ENCODE measurements at regions of chr11 and their contacts with region 1.

Region 1: DNA sequence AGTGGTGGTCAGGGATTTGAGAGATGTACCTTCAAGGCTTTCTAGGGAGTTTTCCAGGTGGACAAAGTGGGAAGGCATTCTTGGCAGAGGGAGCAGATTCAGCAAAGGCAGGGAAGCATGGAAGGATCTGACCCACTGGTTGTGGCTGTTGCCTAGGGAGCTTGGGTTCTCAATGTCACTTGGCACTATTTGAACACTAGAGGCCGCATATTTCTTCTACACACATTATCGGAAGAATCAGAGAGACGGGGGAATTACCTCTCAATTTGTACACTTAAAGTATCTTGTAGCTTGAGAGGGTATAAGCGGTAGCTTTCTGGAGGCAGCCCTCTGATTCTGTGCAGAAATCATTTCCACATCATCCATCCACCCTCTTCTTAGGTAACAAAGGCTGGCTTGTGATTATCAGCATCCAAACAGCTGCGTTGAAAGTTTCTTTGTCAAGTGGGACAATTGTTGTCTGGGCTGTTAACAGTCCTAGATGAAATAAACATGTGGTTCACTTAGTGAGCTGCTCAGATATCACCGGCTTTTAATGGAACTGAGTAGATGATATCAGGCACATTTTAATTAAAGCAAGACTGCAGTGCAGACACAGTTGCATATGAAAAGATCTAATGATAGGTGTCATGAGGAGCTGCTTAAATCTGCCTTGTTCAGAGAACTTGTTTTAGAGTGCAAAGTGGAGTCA is 2.6 kb downstream of the NELL1 start:
- DNase-seq: peak; percentile 67
- H3K4me3 ChIP-seq: peak overlapping the region in 1 of 2 experiments; percentile 52; a peak in 1 of 4 replicates
- H3K27ac ChIP-seq: peak overlapping the region in 1 of 2 experiments; percentile 77; a peak in 2 of 4 replicates
- H3K4me1 ChIP-seq: peaks cover 0 to 32% of the 10 kb centered on the region in 2 experiments; a peak in 2 of 4 replicates
- H3K27me3 ChIP-seq: peaks cover 36% of the 10 kb centered on the region
- CTCF ChIP-seq: peak; percentile 41
- EP300 ChIP-seq: peak in 1 of 2 experiments; percentile 79; a peak in 2 of 4 replicates
- RAD21 ChIP-seq: peak; percentile 37

Region 2: GRCh38 chr11:20647976-20648565 is 23.9 kb before region 1 on chr11:
- CTCF ChIA-PET with region 1: interaction called, 25 read pairs
- POLR2A ChIA-PET with region 1: no interaction called
- DNase-seq: peak; percentile 74
- H3K4me3 ChIP-seq: no peak overlapping the region; a peak in 1 of 4 replicates
- H3K27ac ChIP-seq: no peak overlapping the region
- H3K4me1 ChIP-seq: peaks cover 0 to under 1% of the 10 kb centered on the region in 2 experiments; a peak in 1 of 4 replicates
- H3K27me3 ChIP-seq: no peaks in the 10 kb centered on the region
- CTCF ChIP-seq: peak; percentile 90
- EP300 ChIP-seq: no peak
- RAD21 ChIP-seq: peak; percentile 96

Region 3: GRCh38 chr11:20684688-20685087 is 12.7 kb after region 1 on chr11:
- CTCF ChIA-PET with region 1: interaction called, 15 read pairs
- POLR2A ChIA-PET with region 1: no interaction called
- DNase-seq: no peak
- H3K4me3 ChIP-seq: no peak overlapping the region
- H3K27ac ChIP-seq: no peak overlapping the region
- H3K4me1 ChIP-seq: no peaks in the 10 kb centered on the region
- H3K27me3 ChIP-seq: no peaks in the 10 kb centered on the region
- CTCF ChIP-seq: no peak
- EP300 ChIP-seq: no peak
- RAD21 ChIP-seq: no peak

Region 4: GRCh38 chr11:21038801-21039200 is 366.8 kb after region 1 on chr11:
- CTCF ChIA-PET with region 1: no interaction called
- POLR2A ChIA-PET with region 1: no interaction called
- DNase-seq: no peak
- H3K4me3 ChIP-seq: no peak overlapping the region
- H3K27ac ChIP-seq: no peak overlapping the region
- H3K4me1 ChIP-seq: no peaks in the 10 kb centered on the region
- H3K27me3 ChIP-seq: no peaks in the 10 kb centered on the region
- CTCF ChIP-seq: no peak
- EP300 ChIP-seq: no peak
- RAD21 ChIP-seq: no peak

Region 5: DNA sequence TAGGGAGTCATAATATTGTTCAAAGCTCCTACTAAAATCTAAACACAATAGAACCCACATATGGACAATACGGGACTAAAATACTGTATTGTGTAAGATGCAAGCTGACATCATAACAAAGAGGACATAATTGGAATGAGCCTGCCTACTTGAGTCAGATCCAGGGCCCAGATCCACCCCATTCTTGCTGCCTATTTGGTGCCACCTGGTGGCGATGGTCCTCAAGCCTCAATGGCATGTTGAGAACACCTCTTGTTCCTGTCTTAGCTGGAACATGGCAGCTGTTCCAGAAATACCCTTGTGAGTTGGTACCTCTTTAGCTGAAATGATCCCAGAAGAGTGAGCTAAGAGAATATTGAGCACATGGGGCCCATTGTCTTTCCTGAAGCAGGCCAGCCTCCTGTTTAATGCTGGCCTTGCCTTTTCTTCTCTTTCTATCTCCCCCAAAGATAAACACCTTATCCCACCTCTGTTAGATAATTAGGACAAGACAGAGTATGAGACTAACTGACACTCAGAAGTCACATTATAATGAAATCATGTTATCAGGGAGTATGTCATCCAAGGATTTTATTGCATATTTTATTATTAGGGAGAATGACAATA is 839.9 kb after region 1 on chr11:
- CTCF ChIA-PET with region 1: interaction called, 11 read pairs
- POLR2A ChIA-PET with region 1: no interaction called
- DNase-seq: peak; percentile 36
- H3K4me3 ChIP-seq: peak overlapping the region in 1 of 2 experiments; percentile 32; a peak in 1 of 4 replicates
- H3K27ac ChIP-seq: no peak overlapping the region
- H3K4me1 ChIP-seq: peaks cover 0 to 2% of the 10 kb centered on the region in 2 experiments; a peak in 1 of 4 replicates
- H3K27me3 ChIP-seq: no peaks in the 10 kb centered on the region
- CTCF ChIP-seq: peak; percentile 60
- EP300 ChIP-seq: no peak
- RAD21 ChIP-seq: peak; percentile 75

Region 6: GRCh38 chr11:22157531-22158200 is 1485.7 kb after region 1 on chr11:
- CTCF ChIA-PET with region 1: interaction called, 19 read pairs
- POLR2A ChIA-PET with region 1: no interaction called
- DNase-seq: no peak
- H3K4me3 ChIP-seq: no peak overlapping the region
- H3K27ac ChIP-seq: no peak overlapping the region
- H3K4me1 ChIP-seq: no peaks in the 10 kb centered on the region
- H3K27me3 ChIP-seq: no peaks in the 10 kb centered on the region
- CTCF ChIP-seq: no peak
- EP300 ChIP-seq: no peak
- RAD21 ChIP-seq: no peak

Measured in SK-N-SH (cell line).